ENCODE measurements at regions of chr2 and their contacts with region 1.

Region 1: GRCh38 chr2:147500819-147501395 is 343.9 kb upstream of the ACVR2A start:
- DNase-seq: no peak
- ATAC-seq: no peak
- H3K4me3 ChIP-seq: no peak overlapping the region
- H3K27ac ChIP-seq: no peak overlapping the region
- H3K4me1 ChIP-seq: no peaks in the 10 kb centered on the region
- H3K27me3 ChIP-seq: no peaks in the 10 kb centered on the region
- CTCF ChIP-seq: no peak
- POLR2A ChIP-seq: no peak

Region 2: DNA sequence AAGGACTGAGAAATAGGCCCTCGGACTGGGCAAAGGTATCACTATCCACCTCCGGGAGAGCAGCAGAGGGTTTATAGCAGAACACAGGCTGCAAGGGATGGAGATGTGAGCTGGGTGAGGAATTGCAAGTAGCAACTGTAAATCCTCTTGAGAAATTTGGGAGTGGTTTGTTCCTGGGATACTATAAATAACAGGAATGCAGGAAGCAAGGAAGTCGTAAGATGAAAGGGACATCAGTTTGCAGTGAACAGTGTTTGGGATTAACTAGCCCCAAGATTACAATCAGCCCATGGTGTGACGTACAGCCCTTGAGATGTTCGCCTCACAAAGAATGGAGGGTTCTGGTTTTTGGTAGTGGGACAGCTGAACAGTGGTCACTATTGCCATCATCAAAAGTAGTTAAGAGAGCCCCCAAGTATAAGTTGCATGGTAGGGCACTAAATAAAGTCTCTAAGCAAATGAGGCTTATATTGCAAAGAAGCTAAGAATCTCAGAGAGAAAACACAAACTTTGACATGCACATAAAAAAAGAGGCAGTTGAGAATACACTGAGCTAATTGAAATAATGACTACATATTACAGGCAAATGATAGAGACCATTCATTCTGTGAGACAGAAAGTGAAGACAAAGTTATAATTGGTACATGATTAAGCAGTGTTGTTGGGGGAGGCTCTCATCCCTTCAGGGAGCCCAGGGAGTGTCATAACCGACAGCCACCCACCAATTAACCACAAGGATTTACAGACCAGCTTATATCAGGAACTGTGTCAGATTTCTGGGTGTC is 18.6 kb before region 1 on chr2:
- in situ Hi-C with region 1: no loop called
- intact Hi-C with region 1: loop called (anchors 1 kb)
- DNase-seq: no peak
- ATAC-seq: no peak
- H3K4me3 ChIP-seq: no peak overlapping the region
- H3K27ac ChIP-seq: no peak overlapping the region
- H3K4me1 ChIP-seq: peaks cover 0 to 3% of the 10 kb centered on the region in 2 donors
- H3K27me3 ChIP-seq: no peaks in the 10 kb centered on the region
- CTCF ChIP-seq: no peak
- POLR2A ChIP-seq: no peak